Activated CD4-positive, alpha-beta memory T cell treated with anti-CD3 and anti-CD28 coated beads, Interleukin-2, amount 10 ng/mL, durations not matched to agents 7 days and 5 days (primary cell): ENCODE measurements at regions of chr13 and their contacts with region 1.

Region 1: GRCh38 chr13:97109841-97110492 is 112.2 kb upstream of the MBNL2 start:
- DNase-seq: peak; percentile 79
- H3K4me3 Mint-ChIP-seq: no peak overlapping the region
- H3K27ac Mint-ChIP-seq: no peak overlapping the region
- H3K4me1 Mint-ChIP-seq: peaks cover 7% of the 10 kb centered on the region
- H3K27me3 Mint-ChIP-seq: peaks cover 8% of the 10 kb centered on the region

Region 2: DNA sequence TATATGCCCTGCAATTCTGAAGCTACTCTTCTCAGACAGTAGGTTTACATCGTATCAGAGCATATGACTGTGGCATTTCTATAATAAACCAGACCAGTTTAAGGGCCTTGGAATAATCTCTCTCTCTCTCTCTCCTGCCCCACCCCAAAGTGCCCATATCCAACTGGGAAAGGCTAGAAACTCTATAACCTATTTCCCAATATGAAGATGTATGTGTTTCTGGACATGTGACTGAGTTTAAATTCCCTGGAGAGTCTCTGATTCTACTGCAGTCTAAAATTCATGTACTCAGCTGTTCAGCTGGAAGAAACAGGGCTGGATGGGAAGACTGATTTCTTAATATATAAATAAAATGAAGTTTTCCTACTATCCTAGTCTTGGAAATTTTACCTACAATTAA is 20.2 kb after region 1 on chr13:
- CTCF ChIA-PET with region 1: interaction called, 12 read pairs
- POLR2A ChIA-PET with region 1: no interaction called
- DNase-seq: no peak
- H3K4me3 Mint-ChIP-seq: no peak overlapping the region
- H3K27ac Mint-ChIP-seq: no peak overlapping the region
- H3K4me1 Mint-ChIP-seq: peaks cover 18% of the 10 kb centered on the region
- H3K27me3 Mint-ChIP-seq: peaks cover 3% of the 10 kb centered on the region

Region 3: GRCh38 chr13:97148894-97149293 is 38.9 kb after region 1 on chr13:
- CTCF ChIA-PET with region 1: no interaction called
- POLR2A ChIA-PET with region 1: no interaction called
- DNase-seq: no peak
- H3K4me3 Mint-ChIP-seq: no peak overlapping the region
- H3K27ac Mint-ChIP-seq: no peak overlapping the region
- H3K4me1 Mint-ChIP-seq: no peaks in the 10 kb centered on the region
- H3K27me3 Mint-ChIP-seq: peaks cover 18% of the 10 kb centered on the region

Region 4: GRCh38 chr13:97221989-97222700 is 112.2 kb after region 1 on chr13 and contains the start of gene MBNL2:
- CTCF ChIA-PET with region 1: interaction called, 15 read pairs
- POLR2A ChIA-PET with region 1: interaction called, 3 read pairs
- DNase-seq: peak; percentile 89
- H3K4me3 Mint-ChIP-seq: peak within 1 kb of the TSS; percentile 78
- H3K27ac Mint-ChIP-seq: peak within 1 kb of the TSS; percentile 76
- H3K4me1 Mint-ChIP-seq: peaks cover 42% of the 10 kb centered on the region
- H3K27me3 Mint-ChIP-seq: no peaks in the 10 kb centered on the region
- total RNA-seq, gene MBNL2: 18.0 to 18.8 TPM

Region 5: GRCh38 chr13:97284558-97284957 is 174.6 kb after region 1 on chr13:
- CTCF ChIA-PET with region 1: no interaction called
- POLR2A ChIA-PET with region 1: no interaction called
- DNase-seq: no peak
- H3K4me3 Mint-ChIP-seq: no peak overlapping the region
- H3K27ac Mint-ChIP-seq: no peak overlapping the region
- H3K4me1 Mint-ChIP-seq: peaks cover 14% of the 10 kb centered on the region
- H3K27me3 Mint-ChIP-seq: no peaks in the 10 kb centered on the region

Region 6: DNA sequence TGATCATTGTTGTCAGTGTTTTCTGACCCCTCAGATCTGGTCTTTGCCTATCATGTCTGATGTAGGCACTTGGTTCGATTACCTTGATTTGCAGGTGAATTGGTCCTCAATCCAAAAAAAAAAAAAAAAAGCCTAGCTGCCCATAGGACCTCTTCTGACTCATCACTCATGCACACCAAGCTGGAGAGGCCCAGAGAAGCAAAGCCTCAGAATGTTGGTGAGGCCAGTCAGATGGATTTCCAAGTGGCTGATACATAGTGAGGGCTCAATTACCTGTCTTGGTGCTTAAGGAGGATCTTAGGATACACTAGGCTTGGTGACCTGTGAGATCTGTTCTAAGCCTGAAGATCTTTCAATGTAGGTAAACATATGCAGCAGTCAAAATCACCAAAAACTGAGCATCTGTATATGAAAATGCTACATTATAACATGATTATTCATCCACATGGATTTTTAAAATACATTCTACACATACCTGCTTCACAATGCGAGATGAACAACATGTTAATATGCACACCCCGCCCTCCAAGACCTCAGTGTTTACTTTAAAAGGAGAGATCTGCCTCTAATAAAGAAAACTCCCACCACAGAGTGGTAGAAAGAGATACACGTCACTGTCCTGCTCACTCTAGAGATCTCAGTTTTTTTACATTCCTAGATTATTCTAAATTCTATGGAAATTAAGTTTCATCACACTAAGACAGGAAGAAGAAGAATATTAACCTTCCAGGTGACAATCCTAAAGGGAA is 244.1 kb after region 1 on chr13:
- CTCF ChIA-PET with region 1: interaction called, 130 read pairs
- POLR2A ChIA-PET with region 1: interaction called, 3 read pairs
- DNase-seq: no peak
- H3K4me3 Mint-ChIP-seq: no peak overlapping the region
- H3K27ac Mint-ChIP-seq: no peak overlapping the region
- H3K4me1 Mint-ChIP-seq: no peaks in the 10 kb centered on the region
- H3K27me3 Mint-ChIP-seq: no peaks in the 10 kb centered on the region

Region 7: GRCh38 chr13:97367016-97367822 is 257.3 kb after region 1 on chr13:
- CTCF ChIA-PET with region 1: interaction called, 15 read pairs
- POLR2A ChIA-PET with region 1: interaction called, 4 read pairs
- DNase-seq: no peak
- H3K4me3 Mint-ChIP-seq: no peak overlapping the region
- H3K27ac Mint-ChIP-seq: no peak overlapping the region
- H3K4me1 Mint-ChIP-seq: peaks cover 18% of the 10 kb centered on the region
- H3K27me3 Mint-ChIP-seq: no peaks in the 10 kb centered on the region